BJ (cell line): ENCODE measurements at regions of chr2 and their contacts with region 1.

Region 1: DNA sequence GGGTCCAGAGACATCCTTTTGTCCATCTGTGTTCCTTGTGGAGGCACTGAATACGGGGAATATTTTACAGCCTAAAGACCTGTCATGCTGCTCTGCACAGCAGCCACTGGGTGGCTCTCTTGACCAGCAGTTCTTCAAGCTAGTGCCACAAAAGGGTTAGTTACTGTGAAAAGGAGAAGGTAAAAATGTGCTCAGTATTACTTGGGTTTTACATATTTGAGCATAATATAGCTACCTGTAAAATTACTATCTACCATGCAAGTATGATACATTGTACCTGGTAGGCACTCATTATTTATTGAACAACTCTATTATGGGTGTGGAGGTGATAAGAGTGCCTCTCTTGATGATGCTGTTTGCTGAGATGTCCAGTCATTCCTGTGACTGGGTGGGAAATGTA is 23.6 kb downstream of the FZD5 start:
- DNase-seq: no peak
- H3K4me3 ChIP-seq: no peak overlapping the region
- H3K27me3 ChIP-seq: no peaks in the 10 kb centered on the region
- CTCF ChIP-seq: peak; percentile 93

Region 2: DNA sequence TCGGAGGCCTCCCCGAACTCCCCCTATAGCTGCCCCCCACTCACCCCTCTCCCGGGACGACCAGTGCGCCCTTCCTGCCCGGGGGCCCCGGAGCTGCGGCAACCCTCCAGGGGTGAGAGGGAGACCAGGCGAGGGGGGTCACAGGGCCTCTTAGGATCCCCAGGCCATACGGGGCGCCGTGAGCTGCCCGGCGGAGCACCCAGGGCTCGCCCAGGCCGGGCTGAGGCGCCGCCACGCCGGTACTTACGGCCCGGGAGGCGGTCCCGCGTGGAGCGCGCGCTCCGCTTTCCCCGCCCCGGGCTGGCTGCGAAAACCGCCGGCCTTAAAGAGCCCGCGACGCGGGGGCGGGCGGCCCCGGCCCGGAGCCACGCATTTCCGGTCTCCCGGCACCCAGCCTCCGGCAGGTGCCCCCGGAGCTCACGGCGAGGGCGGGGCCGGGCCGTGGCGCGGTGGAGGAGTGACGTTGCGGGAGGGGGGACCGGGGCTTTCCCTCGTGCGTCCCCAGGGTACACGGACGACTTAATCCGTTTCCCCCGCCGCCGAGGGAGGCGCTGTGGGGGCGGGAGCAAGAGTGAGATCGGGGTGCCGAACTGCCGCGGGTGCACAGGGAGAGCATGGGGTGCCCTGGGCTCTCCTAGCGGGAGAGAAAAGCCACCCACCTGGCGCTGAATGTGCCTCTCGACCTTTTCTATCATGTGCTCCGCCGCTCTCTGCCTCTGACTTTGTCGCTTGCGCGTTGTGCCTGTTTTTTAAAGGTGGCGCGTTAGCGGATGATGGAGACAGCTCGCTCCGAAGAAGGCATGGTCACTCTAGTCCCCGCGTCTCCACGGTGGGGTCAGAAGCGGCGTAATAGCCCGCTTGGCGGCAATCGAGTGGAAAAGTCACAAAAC is 120.9 kb before region 1 on chr2 and contains the start of gene METTL21A:
- CTCF ChIA-PET with region 1: interaction called, 11 read pairs
- POLR2A ChIA-PET with region 1: no interaction called
- DNase-seq: no peak
- H3K4me3 ChIP-seq: peak within 1 kb of the TSS; percentile 88
- H3K27me3 ChIP-seq: no peaks in the 10 kb centered on the region
- CTCF ChIP-seq: peak; percentile 60
- polyA plus RNA-seq, gene METTL21A: 9.9 and 11.3 TPM in 2 replicates

Region 3: GRCh38 chr2:207902821-207903220 is 156.7 kb after region 1 on chr2:
- CTCF ChIA-PET with region 1: no interaction called
- POLR2A ChIA-PET with region 1: no interaction called
- DNase-seq: no peak
- H3K4me3 ChIP-seq: no peak overlapping the region
- H3K27me3 ChIP-seq: no peaks in the 10 kb centered on the region
- CTCF ChIP-seq: no peak

Region 4: GRCh38 chr2:207974216-207974605 is 228.1 kb after region 1 on chr2:
- CTCF ChIA-PET with region 1: interaction called, 20 read pairs
- POLR2A ChIA-PET with region 1: no interaction called
- DNase-seq: no peak
- H3K4me3 ChIP-seq: no peak overlapping the region
- H3K27me3 ChIP-seq: no peaks in the 10 kb centered on the region
- CTCF ChIP-seq: no peak

Region 5: GRCh38 chr2:208062113-208062512 is 316.0 kb after region 1 on chr2:
- CTCF ChIA-PET with region 1: interaction called, 195 read pairs
- POLR2A ChIA-PET with region 1: no interaction called
- DNase-seq: no peak
- H3K4me3 ChIP-seq: no peak overlapping the region
- H3K27me3 ChIP-seq: no peaks in the 10 kb centered on the region; the same call in 1 of the 2 replicates
- CTCF ChIP-seq: peak; percentile 49

Region 6: GRCh38 chr2:208072250-208072892 is 326.2 kb after region 1 on chr2:
- CTCF ChIA-PET with region 1: interaction called, 195 read pairs
- POLR2A ChIA-PET with region 1: no interaction called
- DNase-seq: no peak
- H3K4me3 ChIP-seq: no peak overlapping the region
- H3K27me3 ChIP-seq: no peaks in the 10 kb centered on the region; the same call in 1 of the 2 replicates
- CTCF ChIP-seq: peak; percentile 79